MCF 10A (cell line): ENCODE measurements at regions of chr1 and their contacts with region 1.

Region 1: GRCh38 chr1:234114648-234115307 is 210.3 kb downstream of the SLC35F3 start:
- DNase-seq: peak; percentile 84
- H3K4me3 Mint-ChIP-seq: peak overlapping the region; percentile 57
- H3K27ac Mint-ChIP-seq: no peak overlapping the region
- H3K4me1 Mint-ChIP-seq: peaks cover 13% of the 10 kb centered on the region
- H3K27me3 Mint-ChIP-seq: no peaks in the 10 kb centered on the region
- CTCF ChIP-seq: peak; percentile 97

Region 2: DNA sequence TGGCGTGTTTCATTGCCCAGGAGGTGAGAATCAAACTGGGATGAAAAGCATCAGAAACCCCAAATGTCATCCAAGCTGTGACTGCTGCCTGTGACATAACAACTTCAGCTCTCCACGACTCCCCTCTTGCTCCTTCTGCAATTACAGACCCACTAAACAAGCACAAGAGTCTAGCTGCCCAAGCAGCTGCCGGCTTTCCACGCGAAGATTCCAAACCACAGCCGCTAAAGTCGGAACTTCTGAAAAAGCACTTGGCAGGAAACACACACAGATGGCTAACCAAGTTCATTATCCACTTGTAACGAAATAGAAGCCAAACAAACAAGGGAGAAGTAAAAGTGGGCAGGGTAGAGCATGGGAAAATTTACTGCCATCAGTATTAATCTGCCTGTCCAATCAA is 12.2 kb before region 1 on chr1:
- CTCF ChIA-PET with region 1: interaction called, 40 read pairs
- POLR2A ChIA-PET with region 1: no interaction called
- intact Hi-C with region 1: no loop called
- DNase-seq: no peak
- H3K4me3 Mint-ChIP-seq: no peak overlapping the region
- H3K27ac Mint-ChIP-seq: no peak overlapping the region
- H3K4me1 Mint-ChIP-seq: no peaks in the 10 kb centered on the region
- H3K27me3 Mint-ChIP-seq: no peaks in the 10 kb centered on the region
- CTCF ChIP-seq: no peak

Region 3: GRCh38 chr1:234135501-234135900 is 20.7 kb after region 1 on chr1:
- CTCF ChIA-PET with region 1: interaction called, 17 read pairs
- POLR2A ChIA-PET with region 1: interaction called, 9 read pairs
- intact Hi-C with region 1: no loop called
- DNase-seq: no peak
- H3K4me3 Mint-ChIP-seq: no peak overlapping the region
- H3K27ac Mint-ChIP-seq: no peak overlapping the region
- H3K4me1 Mint-ChIP-seq: peaks cover 15% of the 10 kb centered on the region
- H3K27me3 Mint-ChIP-seq: no peaks in the 10 kb centered on the region
- CTCF ChIP-seq: no peak

Region 4: GRCh38 chr1:234154320-234155251 is 39.8 kb after region 1 on chr1:
- CTCF ChIA-PET with region 1: interaction called, 7 read pairs
- POLR2A ChIA-PET with region 1: interaction called, 3 read pairs
- intact Hi-C with region 1: loop called (anchors 1 kb)
- DNase-seq: peak; percentile 94
- H3K4me3 Mint-ChIP-seq: no peak overlapping the region
- H3K27ac Mint-ChIP-seq: peak overlapping the region; percentile 20
- H3K4me1 Mint-ChIP-seq: peaks cover 2% of the 10 kb centered on the region
- H3K27me3 Mint-ChIP-seq: no peaks in the 10 kb centered on the region
- CTCF ChIP-seq: peak; percentile 99

Region 5: GRCh38 chr1:234398849-234399381 is 284.1 kb after region 1 on chr1:
- CTCF ChIA-PET with region 1: interaction called, 3 read pairs
- POLR2A ChIA-PET with region 1: no interaction called
- intact Hi-C with region 1: loop called (anchors 10 kb)
- DNase-seq: peak; percentile 59
- H3K4me3 Mint-ChIP-seq: no peak overlapping the region
- H3K27ac Mint-ChIP-seq: peak overlapping the region; percentile 59
- H3K4me1 Mint-ChIP-seq: peaks cover 28% of the 10 kb centered on the region
- H3K27me3 Mint-ChIP-seq: no peaks in the 10 kb centered on the region
- CTCF ChIP-seq: no peak

Region 6: GRCh38 chr1:234486498-234487448 is 372.0 kb after region 1 on chr1:
- CTCF ChIA-PET with region 1: interaction called, 11 read pairs
- POLR2A ChIA-PET with region 1: interaction called, 3 read pairs
- intact Hi-C with region 1: no loop called
- DNase-seq: peak; percentile 87
- H3K4me3 Mint-ChIP-seq: no peak overlapping the region
- H3K27ac Mint-ChIP-seq: no peak overlapping the region
- H3K4me1 Mint-ChIP-seq: peaks cover 15% of the 10 kb centered on the region
- H3K27me3 Mint-ChIP-seq: peaks cover 20% of the 10 kb centered on the region
- CTCF ChIP-seq: peak; percentile 96

Region 7: GRCh38 chr1:234564642-234565037 is 449.9 kb after region 1 on chr1:
- CTCF ChIA-PET with region 1: no interaction called
- POLR2A ChIA-PET with region 1: no interaction called
- intact Hi-C with region 1: no loop called
- DNase-seq: peak; percentile 100
- H3K4me3 Mint-ChIP-seq: no peak overlapping the region
- H3K27ac Mint-ChIP-seq: peak overlapping the region; percentile 80
- H3K4me1 Mint-ChIP-seq: peaks cover 25% of the 10 kb centered on the region
- H3K27me3 Mint-ChIP-seq: no peaks in the 10 kb centered on the region
- CTCF ChIP-seq: no peak